Activated T-helper 1 cell treated with anti-CD3 and anti-CD28 coated beads, Interleukin-12 subunit alpha, Interleukin-12 subunit beta, Interleukin-2, Interleukin-4 antibody, amounts not matched to agents 30 ng/mL and 10 ng/mL and 1 ng/mL, durations not matched to agents 14 hours and 24 hours and 36 hours (primary cell): ENCODE measurements at regions of chr5 and their contacts with region 1.

Region 1: GRCh38 chr5:150436141-150436680 is 13.3 kb downstream of the RPS14 start:
- DNase-seq: peak; percentile 84
- H3K4me3 Mint-ChIP-seq: peak overlapping the region; percentile 53
- H3K27ac Mint-ChIP-seq: peak overlapping the region; percentile 12
- H3K4me1 Mint-ChIP-seq: peaks cover 12% of the 10 kb centered on the region
- H3K27me3 Mint-ChIP-seq: peaks cover 2% of the 10 kb centered on the region

Region 2: DNA sequence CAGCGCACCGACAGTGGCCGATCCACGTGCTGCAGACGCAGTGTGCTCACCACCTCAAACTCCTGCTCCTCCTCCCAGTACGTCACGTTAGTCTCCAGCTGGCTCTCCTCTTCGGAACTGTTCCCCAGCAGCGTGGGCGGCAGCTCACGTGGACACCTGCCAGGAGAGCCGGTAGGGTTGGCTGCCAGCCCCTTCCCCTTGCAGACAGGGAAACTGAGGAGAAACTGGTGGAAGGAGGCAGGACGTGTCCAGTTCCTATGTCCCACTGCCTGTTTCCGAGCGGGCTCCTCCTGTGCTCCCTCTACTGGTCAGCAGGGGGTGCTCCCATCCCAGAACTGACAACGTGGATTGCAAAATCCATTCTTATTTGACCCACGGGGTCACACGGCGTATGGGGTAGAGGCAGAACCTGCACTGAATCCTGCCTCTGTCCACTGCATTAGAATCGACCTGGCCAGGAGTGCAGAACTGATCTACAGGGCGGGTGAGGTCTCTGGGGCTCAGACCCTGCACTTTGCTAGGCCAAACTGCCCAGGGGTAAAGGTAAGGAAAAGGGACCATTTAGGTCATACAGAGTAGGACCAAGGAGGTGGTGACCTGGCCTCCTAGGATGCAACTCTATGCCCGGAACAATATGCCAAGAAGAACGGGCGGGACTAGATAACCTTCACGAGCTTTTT is 306.3 kb before region 1 on chr5:
- intact Hi-C with region 1: loop called (anchors 1 kb)
- DNase-seq: peak; percentile 44
- H3K4me3 Mint-ChIP-seq: no peak overlapping the region
- H3K27ac Mint-ChIP-seq: no peak overlapping the region
- H3K4me1 Mint-ChIP-seq: peaks cover 5% of the 10 kb centered on the region
- H3K27me3 Mint-ChIP-seq: peaks cover 2% of the 10 kb centered on the region

Region 3: DNA sequence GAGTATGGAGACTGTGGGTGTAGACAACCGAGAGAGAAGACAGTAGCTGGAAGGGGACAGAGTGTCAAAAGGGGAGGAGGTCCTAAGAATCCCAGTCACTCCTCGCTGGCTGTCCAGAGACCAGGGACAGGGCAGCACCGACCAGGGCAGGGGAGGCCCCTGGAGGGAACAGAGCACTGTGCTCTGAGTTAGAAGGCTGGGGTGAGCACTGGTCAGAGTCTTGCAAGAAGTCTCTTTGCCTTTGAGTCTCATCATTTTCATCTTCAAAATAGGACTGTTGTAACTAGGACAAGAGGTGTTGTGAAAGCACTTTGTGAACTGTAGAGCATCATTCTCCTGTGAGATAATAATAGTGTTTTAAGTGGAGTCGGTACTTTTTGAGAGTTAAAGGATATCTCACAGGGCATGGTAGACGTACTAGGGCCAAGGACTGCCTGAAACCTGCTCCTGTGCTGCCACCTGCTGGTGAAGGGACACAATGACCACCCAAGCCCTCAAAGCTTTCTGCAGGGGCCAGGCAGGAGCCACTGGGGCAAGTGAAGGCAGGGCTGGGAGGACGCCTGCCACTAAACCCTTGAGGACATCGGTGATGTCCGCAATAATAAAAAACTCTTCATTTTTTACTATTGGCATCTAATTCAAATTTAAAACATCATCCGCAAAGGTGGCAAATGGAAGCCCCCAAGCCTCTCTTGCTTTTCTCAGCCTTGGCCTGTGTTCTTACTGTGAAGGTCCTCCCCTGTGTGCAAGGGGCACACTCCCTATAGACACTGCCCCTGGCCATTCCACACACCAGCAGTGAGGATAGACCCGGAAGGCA is 218.1 kb before region 1 on chr5:
- intact Hi-C with region 1: loop called (anchors 2 kb)
- DNase-seq: peak; percentile 67
- H3K4me3 Mint-ChIP-seq: no peak overlapping the region
- H3K27ac Mint-ChIP-seq: no peak overlapping the region
- H3K4me1 Mint-ChIP-seq: no peaks in the 10 kb centered on the region
- H3K27me3 Mint-ChIP-seq: peaks cover 13% of the 10 kb centered on the region

Region 4: DNA sequence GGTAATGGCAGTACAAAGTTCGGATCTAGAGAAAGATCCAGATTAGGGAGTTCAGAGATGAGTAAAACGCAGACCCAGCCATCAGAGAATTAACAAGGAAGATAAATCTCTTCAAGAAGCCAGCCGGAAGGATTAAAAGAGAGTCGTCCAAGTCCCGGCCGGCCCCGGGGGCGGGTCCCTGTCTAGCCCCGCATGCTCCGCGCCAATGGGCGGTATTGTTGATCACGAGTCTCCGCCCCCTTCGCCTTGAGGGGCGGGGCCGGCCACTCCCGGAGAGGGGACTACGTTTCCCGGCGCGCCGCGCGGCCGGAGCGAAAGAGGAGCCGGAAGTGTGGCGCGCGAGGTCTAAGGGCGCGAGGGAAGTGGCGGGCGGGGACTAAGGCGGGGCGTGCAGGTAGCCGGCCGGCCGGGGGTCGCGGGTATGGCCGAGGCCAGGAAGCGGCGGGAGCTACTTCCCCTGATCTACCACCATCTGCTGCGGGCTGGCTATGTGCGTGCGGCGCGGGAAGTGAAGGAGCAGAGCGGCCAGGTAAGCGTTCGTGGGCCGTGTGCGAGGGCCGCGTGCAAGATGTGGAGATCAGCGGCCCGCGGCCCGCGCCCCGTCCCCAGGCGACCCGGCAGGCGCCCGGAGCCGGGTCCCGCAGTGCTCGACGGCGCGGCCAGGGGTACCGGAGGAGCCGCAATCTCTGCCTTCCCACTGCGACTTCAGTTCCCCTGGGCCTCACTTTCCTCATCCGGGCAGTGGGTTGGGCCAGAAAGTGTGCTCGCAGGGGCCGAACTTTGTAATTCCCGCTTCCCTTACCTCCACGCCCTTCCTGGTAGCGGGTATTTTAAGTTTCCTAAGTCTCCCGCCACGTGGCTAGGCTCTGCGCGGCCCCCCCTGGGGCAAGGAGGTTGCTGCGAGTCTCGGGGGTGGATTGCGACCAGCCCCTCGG is 78.6 kb before region 1 on chr5 and contains the start of gene TCOF1:
- intact Hi-C with region 1: loop called (anchors 1 kb)
- DNase-seq: peak; percentile 97
- H3K4me3 Mint-ChIP-seq: peak within 1 kb of the TSS; percentile 93
- H3K27ac Mint-ChIP-seq: peak within 1 kb of the TSS; percentile 91
- H3K4me1 Mint-ChIP-seq: peaks cover 39% of the 10 kb centered on the region
- H3K27me3 Mint-ChIP-seq: no peaks in the 10 kb centered on the region
- total RNA-seq, gene TCOF1: 130 and 131 TPM in 2 replicates

Region 5: DNA sequence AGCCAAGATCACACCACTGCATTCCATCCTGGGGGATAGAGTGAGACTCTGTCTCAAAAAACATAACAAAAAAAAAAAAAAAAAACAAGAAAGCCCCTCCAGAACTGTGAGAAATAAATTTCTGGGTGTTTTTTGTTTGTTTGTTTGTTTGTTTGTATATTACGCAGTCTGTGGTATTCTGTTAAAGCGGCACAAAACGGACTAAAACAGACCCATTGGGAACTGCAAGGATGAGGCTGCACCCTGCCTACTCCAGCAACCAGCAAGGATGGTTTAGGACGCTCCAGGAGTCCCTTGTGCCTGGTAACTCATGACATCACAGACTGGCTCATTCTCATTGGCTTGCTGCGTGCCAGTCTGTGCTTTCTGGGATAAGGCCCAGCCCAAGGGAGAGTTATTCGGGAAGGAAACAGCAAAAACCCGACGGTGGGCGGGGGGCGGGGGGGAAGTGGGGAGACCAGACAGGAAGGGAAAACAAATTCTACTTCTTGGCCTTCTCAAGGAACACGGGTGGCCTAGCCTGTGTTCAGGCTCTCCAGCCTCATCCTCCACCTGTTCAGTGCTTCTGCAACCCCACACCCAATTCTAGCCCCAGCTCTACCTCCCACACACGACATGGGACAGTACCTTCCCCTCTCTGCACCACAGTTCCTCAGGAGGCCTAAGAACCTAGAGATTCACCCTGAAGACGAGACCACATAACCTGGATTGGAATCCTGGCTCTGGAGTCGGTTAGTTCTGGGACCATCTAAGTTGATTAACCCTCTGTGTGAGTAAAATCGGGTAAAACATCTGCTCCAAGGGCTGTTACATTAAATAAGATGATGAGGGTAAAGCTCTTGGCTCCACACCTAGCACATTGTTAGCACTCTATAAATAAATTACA is 26.3 kb before region 1 on chr5:
- intact Hi-C with region 1: loop called (anchors 1 kb)
- DNase-seq: peak; percentile 38
- H3K4me3 Mint-ChIP-seq: peak overlapping the region; percentile 91
- H3K27ac Mint-ChIP-seq: peak overlapping the region; percentile 98
- H3K4me1 Mint-ChIP-seq: peaks cover 45% of the 10 kb centered on the region
- H3K27me3 Mint-ChIP-seq: no peaks in the 10 kb centered on the region